ENCODE measurements at regions of chr1 and their contacts with region 1.

Region 1: GRCh38 chr1:27662707-27663393 is 9.1 kb downstream of the IFI6 start:
- DNase-seq: peak; percentile 93
- H3K4me3 Mint-ChIP-seq: peak overlapping the region; percentile 53
- H3K27ac Mint-ChIP-seq: peak overlapping the region; percentile 97
- H3K4me1 Mint-ChIP-seq: peaks cover 64% of the 10 kb centered on the region
- H3K27me3 Mint-ChIP-seq: no peaks in the 10 kb centered on the region

Region 2: DNA sequence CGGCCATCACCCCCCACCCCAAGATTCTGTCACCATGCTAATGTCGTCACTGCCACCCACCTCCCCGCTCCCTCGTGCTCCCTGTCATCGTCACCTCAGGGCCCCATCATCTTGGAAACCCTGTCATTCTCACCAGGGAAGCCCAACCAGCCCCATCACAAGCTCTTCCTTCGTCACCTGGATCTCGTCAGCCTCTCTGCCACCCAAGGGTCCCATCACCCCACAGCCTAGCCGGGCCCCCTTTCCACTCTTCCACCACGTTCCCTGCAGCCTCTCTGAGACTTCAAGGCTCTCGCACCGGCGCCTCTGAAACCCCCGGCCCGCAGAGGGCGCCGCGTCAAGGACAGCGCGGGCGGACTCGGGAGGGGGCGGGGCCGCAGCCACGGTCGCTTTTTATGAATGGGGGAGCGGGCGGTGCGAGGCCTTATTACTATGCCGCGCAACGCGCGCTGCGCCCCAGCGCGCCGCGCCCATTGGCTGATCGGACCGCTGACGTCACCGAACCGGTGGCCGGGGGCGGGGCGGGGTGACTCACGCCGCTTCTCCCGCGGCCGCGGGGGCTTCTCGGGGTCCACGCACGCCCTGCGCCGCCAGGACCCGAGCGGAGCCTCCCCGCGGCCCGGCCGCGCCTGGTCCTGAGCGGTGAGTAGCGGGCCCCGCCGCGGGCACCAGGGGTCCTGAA is 270.6 kb before region 1 on chr1 and contains the start of gene GPR3:
- CTCF ChIA-PET with region 1: interaction called, 11 read pairs
- POLR2A ChIA-PET with region 1: no interaction called
- DNase-seq: peak; percentile 95
- H3K4me3 Mint-ChIP-seq: peak within 1 kb of the TSS; percentile 74
- H3K27ac Mint-ChIP-seq: peak within 1 kb of the TSS; percentile 54
- H3K4me1 Mint-ChIP-seq: peaks cover 25% of the 10 kb centered on the region
- H3K27me3 Mint-ChIP-seq: peaks cover 3% of the 10 kb centered on the region
- total RNA-seq, gene GPR3: 0.58 to 0.65 TPM

Region 3: GRCh38 chr1:27504588-27505419 is 158.0 kb before region 1 on chr1:
- CTCF ChIA-PET with region 1: no interaction called
- POLR2A ChIA-PET with region 1: no interaction called
- DNase-seq: no peak
- H3K4me3 Mint-ChIP-seq: no peak overlapping the region
- H3K27ac Mint-ChIP-seq: no peak overlapping the region
- H3K4me1 Mint-ChIP-seq: no peaks in the 10 kb centered on the region
- H3K27me3 Mint-ChIP-seq: no peaks in the 10 kb centered on the region

Region 4: GRCh38 chr1:27603681-27604578 is 58.9 kb before region 1 on chr1 and contains the start of gene AHDC1:
- CTCF ChIA-PET with region 1: interaction called, 448 read pairs
- POLR2A ChIA-PET with region 1: interaction called, 132 read pairs
- DNase-seq: peak; percentile 92
- H3K4me3 Mint-ChIP-seq: peak within 1 kb of the TSS; percentile 97
- H3K27ac Mint-ChIP-seq: peak within 1 kb of the TSS; percentile 80
- H3K4me1 Mint-ChIP-seq: peaks cover 48% of the 10 kb centered on the region
- H3K27me3 Mint-ChIP-seq: peaks cover 8% of the 10 kb centered on the region
- total RNA-seq, gene AHDC1: 16.9 to 18.9 TPM

Region 5: GRCh38 chr1:27634177-27634984 is 28.5 kb before region 1 on chr1:
- CTCF ChIA-PET with region 1: interaction called, 10 read pairs
- POLR2A ChIA-PET with region 1: interaction called, 11 read pairs
- DNase-seq: peak; percentile 54
- H3K4me3 Mint-ChIP-seq: peak overlapping the region; percentile 29
- H3K27ac Mint-ChIP-seq: no peak overlapping the region
- H3K4me1 Mint-ChIP-seq: peaks cover 66% of the 10 kb centered on the region
- H3K27me3 Mint-ChIP-seq: peaks cover 2% of the 10 kb centered on the region

Region 6: DNA sequence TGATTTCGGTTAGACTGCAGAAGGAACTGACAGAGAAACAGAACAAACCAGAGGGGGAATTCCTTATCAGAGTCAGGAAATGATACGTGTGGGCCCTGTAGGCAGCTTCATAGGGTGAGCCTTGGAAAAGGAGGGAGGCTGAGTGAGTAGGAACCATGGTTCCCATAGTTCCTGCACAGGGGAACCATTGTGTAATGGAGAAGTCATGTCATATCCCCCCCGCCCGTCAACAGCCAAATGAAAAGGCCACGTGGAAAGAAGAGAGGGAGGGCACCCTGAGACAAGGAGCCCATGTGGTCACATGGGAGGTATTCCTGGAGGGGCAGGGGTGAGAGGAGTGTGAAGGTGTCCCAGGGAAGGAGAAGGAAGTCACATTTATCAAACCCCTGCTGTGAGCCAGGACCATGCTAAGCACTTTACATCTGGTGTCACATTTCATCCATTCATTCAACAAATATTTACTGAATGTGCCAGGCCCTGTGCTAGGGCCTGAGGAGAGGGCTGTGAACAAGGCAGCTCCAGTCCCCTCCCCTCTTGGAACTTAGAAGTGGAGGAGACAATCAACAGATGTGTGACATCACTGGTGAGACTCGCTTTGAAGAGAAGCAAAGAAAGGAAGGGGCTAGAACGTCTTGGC is 12.2 kb before region 1 on chr1:
- CTCF ChIA-PET with region 1: interaction called, 10 read pairs
- POLR2A ChIA-PET with region 1: interaction called, 24 read pairs
- DNase-seq: no peak
- H3K4me3 Mint-ChIP-seq: no peak overlapping the region
- H3K27ac Mint-ChIP-seq: no peak overlapping the region
- H3K4me1 Mint-ChIP-seq: peaks cover 9% of the 10 kb centered on the region
- H3K27me3 Mint-ChIP-seq: no peaks in the 10 kb centered on the region